Heart left ventricle (tissue), 16 donors: ENCODE measurements at regions of chr10 and their contacts with region 1.

Region 1: DNA sequence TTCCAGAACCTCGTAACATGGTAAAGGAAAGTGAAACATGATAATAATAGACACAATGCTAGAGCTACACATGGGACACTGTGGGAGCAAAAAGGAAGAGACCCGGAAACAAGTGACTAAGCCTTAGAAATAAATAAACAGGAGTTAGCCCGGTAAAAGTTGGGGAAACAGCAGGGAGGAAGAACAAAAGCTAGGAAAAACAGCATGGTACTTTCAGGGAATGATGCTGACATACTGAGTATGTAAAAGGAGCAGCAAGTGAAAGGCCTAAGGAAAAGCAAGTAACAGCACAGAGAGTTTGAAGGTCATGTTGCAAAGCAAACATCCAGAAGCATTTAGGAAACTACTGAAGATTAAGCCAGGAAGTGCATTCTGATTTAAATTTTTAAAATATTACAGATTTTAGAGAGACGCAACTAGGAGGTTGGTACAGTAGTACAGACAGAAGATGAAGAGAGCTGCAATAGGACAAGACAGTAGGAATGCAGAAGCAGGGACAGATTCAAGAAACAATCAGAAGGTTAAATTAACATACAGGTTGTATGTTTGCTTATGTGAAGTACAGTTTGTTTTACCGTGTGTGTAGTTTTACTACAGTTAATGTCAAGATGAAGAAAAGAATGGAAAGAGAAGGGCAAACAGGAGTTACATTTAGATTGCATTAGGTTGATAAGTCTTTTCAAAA is 63.7 kb downstream of the ARHGAP12 start:
- DNase-seq: no peak
- ATAC-seq: peak; percentile 28 to 70 (median 42)
- H3K4me3 ChIP-seq: peak overlapping the region in 7 of 12 donors; percentile 5 to 22 (median 19)
- H3K27ac ChIP-seq: peak overlapping the region in 9 of 12 donors; percentile 3 to 46 (median 18)
- H3K4me1 ChIP-seq: peaks cover 0 to 31% (median 17%) of the 10 kb centered on the region in 12 donors
- H3K27me3 ChIP-seq: no peaks in the 10 kb centered on the region
- CTCF ChIP-seq: no peak
- POLR2A ChIP-seq: no peak

Region 2: GRCh38 chr10:31928549-31929260 is 63.7 kb after region 1 on chr10 and contains the start of gene ARHGAP12:
- intact Hi-C with region 1: loop called in 7 of 10 experiments (anchors 2 to 10 kb)
- DNase-seq: peak; percentile 92 to 96 (median 93)
- ATAC-seq: peak; percentile 88 to 97 (median 96)
- H3K4me3 ChIP-seq: peak within 1 kb of the TSS; percentile 66 to 97 (median 90)
- H3K27ac ChIP-seq: peak within 1 kb of the TSS; percentile 72 to 99 (median 96)
- H3K4me1 ChIP-seq: peaks cover 0 to 49% (median 28%) of the 10 kb centered on the region in 12 donors
- H3K27me3 ChIP-seq: no peaks in the 10 kb centered on the region
- CTCF ChIP-seq: peak in 2 of 12 donors; percentile 2 to 19
- POLR2A ChIP-seq: peak; percentile 78 to 95
- total RNA-seq, gene ARHGAP12: 17.6 to 27.6 (median 21.2) TPM

Region 3: GRCh38 chr10:31947144-31947926 is 82.4 kb after region 1 on chr10:
- intact Hi-C with region 1: loop called in 8 of 10 experiments (anchors 1 to 5 kb)
- DNase-seq: no peak
- ATAC-seq: peak; percentile 71 to 92 (median 82)
- H3K4me3 ChIP-seq: peak overlapping the region in 3 of 12 donors; percentile 4 to 20 (median 20)
- H3K27ac ChIP-seq: peak overlapping the region in 6 of 12 donors; percentile 6 to 59 (median 31)
- H3K4me1 ChIP-seq: peaks cover 0 to 33% (median 0%) of the 10 kb centered on the region in 12 donors
- H3K27me3 ChIP-seq: no peaks in the 10 kb centered on the region
- CTCF ChIP-seq: peak in 11 of 12 donors; percentile 25 to 62 (median 44)
- POLR2A ChIP-seq: no peak

Region 4: GRCh38 chr10:31999064-31999660 is 134.2 kb after region 1 on chr10:
- intact Hi-C with region 1: loop called in 6 of 10 experiments (anchors 2 to 10 kb)
- DNase-seq: no peak
- ATAC-seq: no peak
- H3K4me3 ChIP-seq: no peak overlapping the region
- H3K27ac ChIP-seq: no peak overlapping the region
- H3K4me1 ChIP-seq: peaks cover 0 to 23% (median 4%) of the 10 kb centered on the region in 12 donors
- H3K27me3 ChIP-seq: no peaks in the 10 kb centered on the region
- CTCF ChIP-seq: no peak
- POLR2A ChIP-seq: no peak

Region 5: GRCh38 chr10:32005050-32005449 is 140.1 kb after region 1 on chr10:
- intact Hi-C with region 1: loop called in 8 of 10 experiments (anchors 2 to 10 kb)
- DNase-seq: no peak
- ATAC-seq: peak; percentile 16 to 57 (median 43)
- H3K4me3 ChIP-seq: no peak overlapping the region
- H3K27ac ChIP-seq: peak overlapping the region in 1 of 12 donors; percentile 38
- H3K4me1 ChIP-seq: peaks cover 0 to 31% (median 6%) of the 10 kb centered on the region in 12 donors
- H3K27me3 ChIP-seq: no peaks in the 10 kb centered on the region
- CTCF ChIP-seq: peak in 11 of 12 donors; percentile 25 to 56 (median 38)
- POLR2A ChIP-seq: no peak

Region 6: GRCh38 chr10:32207544-32207943 is 342.6 kb after region 1 on chr10:
- intact Hi-C with region 1: loop called in 6 of 10 experiments (anchors 1 to 10 kb)
- DNase-seq: peak; percentile 20 to 63 (median 34)
- ATAC-seq: peak in 3 of 4 donors; percentile 42 to 83 (median 61)
- H3K4me3 ChIP-seq: no peak overlapping the region
- H3K27ac ChIP-seq: no peak overlapping the region
- H3K4me1 ChIP-seq: peaks cover 0 to 4% (median 0%) of the 10 kb centered on the region in 12 donors
- H3K27me3 ChIP-seq: no peaks in the 10 kb centered on the region
- CTCF ChIP-seq: peak; percentile 39 to 74 (median 58)
- POLR2A ChIP-seq: no peak